Activated naive CD4-positive, alpha-beta T cell treated with anti-CD3 and anti-CD28 coated beads for 36 hours (primary cell): ENCODE measurements at regions of chr7 and their contacts with region 1.

Region 1: DNA sequence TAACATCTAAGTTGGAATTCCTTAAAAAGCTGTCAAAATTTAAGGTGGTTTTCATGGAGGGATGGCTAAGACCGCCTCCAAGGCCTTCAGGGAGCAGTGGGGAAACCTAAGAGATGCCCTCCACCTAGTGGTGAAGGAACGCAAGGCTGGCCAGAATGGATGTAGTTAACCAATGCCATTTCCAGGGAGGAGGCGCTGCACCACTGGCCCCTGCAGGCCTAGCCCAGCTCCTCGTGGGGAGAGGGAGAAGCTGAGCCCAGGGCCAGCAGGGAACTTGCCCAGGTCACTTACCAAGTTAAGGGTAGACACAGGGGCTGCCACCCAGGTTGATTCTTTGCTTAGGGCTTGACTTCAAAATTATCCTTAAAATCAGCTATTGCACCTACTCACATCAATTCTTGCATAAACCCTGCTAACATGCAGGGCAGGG is 32.0 kb downstream of the FIGNL1 start:
- DNase-seq: peak; percentile 92
- H3K4me3 Mint-ChIP-seq: no peak overlapping the region
- H3K27ac Mint-ChIP-seq: no peak overlapping the region
- H3K4me1 Mint-ChIP-seq: peaks cover 24% of the 10 kb centered on the region
- H3K27me3 Mint-ChIP-seq: no peaks in the 10 kb centered on the region

Region 2: DNA sequence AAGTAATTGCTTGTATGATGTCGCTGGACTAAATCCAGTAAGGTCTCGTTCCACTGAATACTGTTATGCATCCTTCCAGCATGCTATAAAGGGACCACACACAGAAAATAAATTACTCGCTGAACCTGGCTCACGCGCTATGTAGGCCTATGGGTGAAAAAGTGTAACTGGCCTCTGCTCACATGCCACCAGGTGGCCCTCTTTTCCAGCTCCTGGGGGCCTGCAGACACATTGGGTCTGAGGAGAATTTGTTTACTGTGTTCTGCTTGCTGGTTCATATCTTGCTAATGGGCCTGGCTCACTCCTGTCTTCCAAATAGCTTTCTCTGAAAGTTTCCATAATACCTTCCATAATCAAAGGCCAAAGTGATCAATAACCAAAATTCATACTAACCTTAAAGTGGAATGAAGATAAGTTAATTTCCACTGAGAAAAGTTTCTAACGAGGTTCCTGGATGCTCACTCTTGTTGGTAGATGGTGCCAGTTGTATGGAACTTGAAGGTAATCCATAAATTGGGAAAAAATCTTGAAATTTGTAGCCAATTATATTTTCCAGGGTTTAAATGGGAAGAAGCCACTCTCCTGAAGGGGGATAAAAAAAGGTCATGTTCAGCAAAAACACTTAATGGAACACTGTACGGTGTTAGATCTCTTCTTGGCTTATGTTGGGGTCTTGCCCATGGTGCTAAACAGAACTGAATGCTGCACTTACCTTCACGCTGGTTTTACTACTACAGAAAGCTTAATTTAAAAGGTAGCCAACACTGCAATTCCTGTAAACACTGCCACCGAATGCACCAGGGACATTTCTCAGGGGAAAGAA is 298.1 kb before region 1 on chr7:
- CTCF ChIA-PET with region 1: interaction called, 44 read pairs
- intact Hi-C with region 1: loop called (anchors 1 kb)
- DNase-seq: peak; percentile 57
- H3K4me3 Mint-ChIP-seq: no peak overlapping the region
- H3K27ac Mint-ChIP-seq: no peak overlapping the region
- H3K4me1 Mint-ChIP-seq: no peaks in the 10 kb centered on the region
- H3K27me3 Mint-ChIP-seq: no peaks in the 10 kb centered on the region

Region 3: GRCh38 chr7:50156706-50157105 is 261.4 kb before region 1 on chr7:
- CTCF ChIA-PET with region 1: interaction called, 16 read pairs
- intact Hi-C with region 1: no loop called
- DNase-seq: no peak
- H3K4me3 Mint-ChIP-seq: peak overlapping the region; percentile 50
- H3K27ac Mint-ChIP-seq: peak overlapping the region; percentile 92
- H3K4me1 Mint-ChIP-seq: peaks cover 45% of the 10 kb centered on the region
- H3K27me3 Mint-ChIP-seq: no peaks in the 10 kb centered on the region

Region 4: GRCh38 chr7:50227726-50228125 is 190.4 kb before region 1 on chr7:
- CTCF ChIA-PET with region 1: interaction called, 8 read pairs
- intact Hi-C with region 1: loop called (anchors 1 kb)
- DNase-seq: no peak
- H3K4me3 Mint-ChIP-seq: peak overlapping the region; percentile 64
- H3K27ac Mint-ChIP-seq: peak overlapping the region; percentile 81
- H3K4me1 Mint-ChIP-seq: peaks cover 37% of the 10 kb centered on the region
- H3K27me3 Mint-ChIP-seq: no peaks in the 10 kb centered on the region

Region 5: DNA sequence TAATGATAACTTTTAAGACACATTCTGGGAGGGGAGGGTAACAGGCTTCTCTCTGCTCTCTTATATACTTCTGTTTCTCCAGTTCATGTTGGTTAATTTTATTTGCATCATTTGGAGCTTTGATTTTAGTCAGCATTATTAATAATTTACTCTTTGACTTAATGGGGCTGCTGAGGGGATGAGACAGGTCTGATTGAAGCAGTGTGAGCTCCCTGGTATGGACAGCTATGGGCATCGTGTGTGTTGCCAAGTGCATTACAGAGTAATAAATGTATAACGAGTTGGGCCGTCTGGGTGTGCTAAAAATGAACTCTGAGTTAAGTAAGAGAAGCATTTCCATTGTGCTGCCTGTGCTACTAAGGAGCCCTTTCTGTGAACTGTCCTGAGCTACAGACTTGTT is 145.3 kb before region 1 on chr7:
- CTCF ChIA-PET with region 1: interaction called, 12 read pairs
- intact Hi-C with region 1: loop called (anchors 1 kb)
- DNase-seq: no peak
- H3K4me3 Mint-ChIP-seq: no peak overlapping the region
- H3K27ac Mint-ChIP-seq: no peak overlapping the region
- H3K4me1 Mint-ChIP-seq: peaks cover 83% of the 10 kb centered on the region
- H3K27me3 Mint-ChIP-seq: no peaks in the 10 kb centered on the region

Region 6: DNA sequence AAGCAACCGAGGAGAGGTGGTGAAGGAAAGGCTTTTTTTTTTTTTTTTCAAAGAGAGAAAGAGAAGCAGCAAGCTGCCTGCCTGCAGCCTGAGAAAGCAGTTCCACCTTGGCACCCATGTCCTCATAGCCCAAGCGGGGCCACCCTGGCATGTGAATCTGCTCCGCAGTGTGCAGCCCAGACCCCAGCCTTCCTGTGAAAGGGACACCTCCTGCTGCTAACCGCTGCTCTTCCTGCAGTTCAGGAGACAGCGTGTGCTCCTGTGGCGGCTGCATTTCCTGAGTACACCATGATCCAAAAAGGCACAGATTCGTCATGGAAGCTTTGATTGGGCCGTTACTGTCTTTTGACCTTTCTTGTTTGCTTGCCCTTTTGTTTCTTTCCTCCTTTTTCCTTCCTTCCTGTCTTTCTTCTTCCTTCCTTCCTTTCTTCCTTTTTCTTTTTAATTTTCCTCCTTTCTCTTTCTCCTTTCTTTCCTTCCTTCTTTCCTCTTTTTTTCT is 75.4 kb before region 1 on chr7:
- CTCF ChIA-PET with region 1: interaction called, 14 read pairs
- intact Hi-C with region 1: loop called (anchors 2 kb)
- DNase-seq: peak; percentile 74
- H3K4me3 Mint-ChIP-seq: peak overlapping the region; percentile 70
- H3K27ac Mint-ChIP-seq: no peak overlapping the region
- H3K4me1 Mint-ChIP-seq: peaks cover 64% of the 10 kb centered on the region
- H3K27me3 Mint-ChIP-seq: no peaks in the 10 kb centered on the region